B cell (primary cell): ENCODE measurements at regions of chr5 and their contacts with region 1.

Region 1: GRCh38 chr5:73565139-73565968 is at the starts of genes ANKRA2 and UTP15:
- DNase-seq: peak; percentile 99
- ATAC-seq: peak; percentile 97
- H3K4me3 ChIP-seq: peak within 1 kb of the TSS; percentile 77 to 97 (median 92)
- H3K4me3 Mint-ChIP-seq: peak within 1 kb of the TSS; percentile 88
- H3K27ac ChIP-seq: peak within 1 kb of the TSS; percentile 92 to 97
- H3K27ac Mint-ChIP-seq: peak within 1 kb of the TSS; percentile 97
- H3K4me1 ChIP-seq: peaks cover 18 to 23% of the 10 kb centered on the region in 2 donors
- H3K4me1 Mint-ChIP-seq: peaks cover 36% of the 10 kb centered on the region
- H3K27me3 ChIP-seq: no peaks in the 10 kb centered on the region
- H3K27me3 Mint-ChIP-seq: no peaks in the 10 kb centered on the region
- CTCF ChIP-seq: no peak
- total RNA-seq, gene ANKRA2: 47.9 and 56.1 TPM in 2 replicates
- total RNA-seq, gene UTP15: 25.3 and 29.9 TPM in 2 replicates

Region 2: GRCh38 chr5:72319976-72320752 is 1245.2 kb before region 1 on chr5 and contains the starts of genes MRPS27 and PTCD2:
- CTCF ChIA-PET with region 1: no interaction called
- POLR2A ChIA-PET with region 1: no interaction called
- intact Hi-C with region 1: loop called (anchors 2 kb)
- DNase-seq: peak; percentile 97
- ATAC-seq: peak; percentile 99
- H3K4me3 ChIP-seq: peak within 1 kb of the TSS; percentile 61 to 98 (median 81)
- H3K4me3 Mint-ChIP-seq: peak within 1 kb of the TSS; percentile 91
- H3K27ac ChIP-seq: peak within 1 kb of the TSS; percentile 47 to 60
- H3K27ac Mint-ChIP-seq: peak within 1 kb of the TSS; percentile 95
- H3K4me1 ChIP-seq: peaks cover 8 to 13% of the 10 kb centered on the region in 2 donors
- H3K4me1 Mint-ChIP-seq: peaks cover 29% of the 10 kb centered on the region
- H3K27me3 ChIP-seq: no peaks in the 10 kb centered on the region
- H3K27me3 Mint-ChIP-seq: no peaks in the 10 kb centered on the region
- CTCF ChIP-seq: no peak
- total RNA-seq, gene MRPS27: 52.8 and 58.3 TPM in 2 replicates
- total RNA-seq, gene PTCD2: 10.1 and 10.5 TPM in 2 replicates

Region 3: DNA sequence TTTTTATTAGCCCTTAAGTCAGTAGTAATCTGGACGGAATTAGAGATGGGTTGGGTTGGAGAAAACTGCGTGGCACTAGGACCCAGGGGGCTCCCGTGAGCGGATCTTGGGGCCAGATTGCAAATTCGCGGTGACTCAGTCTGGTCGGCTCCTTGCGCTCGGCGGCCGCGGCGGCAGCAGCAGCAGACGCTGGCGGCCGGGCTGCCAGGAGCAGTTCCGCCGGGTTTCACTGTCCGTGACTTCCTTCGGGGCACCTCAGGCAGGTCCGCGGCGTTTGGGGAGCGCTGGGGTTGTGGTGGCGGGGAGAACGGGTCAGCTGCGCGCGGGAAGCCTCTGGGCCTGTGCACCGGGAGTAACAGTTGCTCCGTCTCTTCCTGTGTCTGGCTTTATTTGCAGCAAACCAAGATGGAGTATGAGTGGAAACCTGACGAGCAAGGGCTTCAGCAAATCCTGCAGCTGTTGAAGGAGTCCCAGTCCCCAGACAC is 717.3 kb before region 1 on chr5:
- CTCF ChIA-PET with region 1: no interaction called
- POLR2A ChIA-PET with region 1: no interaction called
- intact Hi-C with region 1: loop called (anchors 10 kb)
- DNase-seq: peak; percentile 90
- ATAC-seq: peak; percentile 75
- H3K4me3 ChIP-seq: peak overlapping the region; percentile 75 to 96 (median 91)
- H3K4me3 Mint-ChIP-seq: peak overlapping the region; percentile 99
- H3K27ac ChIP-seq: peak overlapping the region; percentile 83 to 89
- H3K27ac Mint-ChIP-seq: peak overlapping the region; percentile 99
- H3K4me1 ChIP-seq: peaks cover 18 to 40% of the 10 kb centered on the region in 2 donors
- H3K4me1 Mint-ChIP-seq: peaks cover 54% of the 10 kb centered on the region
- H3K27me3 ChIP-seq: no peaks in the 10 kb centered on the region
- H3K27me3 Mint-ChIP-seq: no peaks in the 10 kb centered on the region
- CTCF ChIP-seq: no peak

Region 4: DNA sequence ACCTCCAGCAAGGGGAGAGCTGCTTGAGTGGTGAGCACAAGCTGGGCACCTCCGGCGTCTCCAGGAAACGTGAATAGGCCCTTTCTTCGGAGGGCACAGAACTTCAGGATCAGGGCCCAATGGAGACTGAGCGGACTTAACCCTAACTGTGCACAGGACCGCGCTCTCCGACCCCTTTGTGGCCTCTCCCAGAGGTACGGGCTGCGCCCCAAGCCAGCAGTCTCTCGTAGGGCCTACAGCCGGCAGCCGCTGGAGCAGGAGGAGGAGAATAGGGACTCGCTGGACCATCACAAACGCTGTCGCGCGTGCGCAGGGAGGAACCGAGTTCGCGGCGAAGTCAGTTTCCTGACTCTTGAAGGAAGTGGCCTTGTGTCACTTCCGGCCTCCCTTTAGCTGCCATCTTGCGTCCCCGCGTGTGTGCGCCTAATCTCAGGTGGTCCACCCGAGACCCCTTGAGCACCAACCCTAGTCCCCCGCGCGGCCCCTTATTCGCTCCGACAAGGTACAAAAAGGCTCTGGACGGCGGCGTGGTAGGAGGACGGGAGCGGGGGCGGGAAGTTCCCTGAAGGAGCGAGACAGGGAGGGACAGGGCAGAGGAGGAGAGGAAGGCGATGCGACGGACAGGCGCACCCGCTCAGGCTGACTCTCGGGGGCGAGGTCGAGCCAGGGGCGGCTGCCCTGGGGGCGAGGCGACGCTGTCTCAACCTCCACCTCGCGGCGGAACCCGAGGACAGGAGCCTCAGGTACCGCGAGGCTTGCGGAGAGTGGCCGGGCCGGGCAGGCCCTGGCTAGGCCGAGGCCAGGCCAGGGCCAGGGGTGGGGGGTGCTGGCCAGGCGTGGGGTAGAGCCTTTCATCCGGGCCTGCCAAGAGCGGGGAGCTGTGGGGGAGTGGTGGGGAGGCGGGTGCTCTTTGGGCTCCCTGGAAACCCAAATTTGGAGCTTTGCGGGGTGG is 67.0 kb before region 1 on chr5 and contains the start of gene BTF3:
- CTCF ChIA-PET with region 1: interaction called, 3 read pairs
- POLR2A ChIA-PET with region 1: interaction called, 3 read pairs
- intact Hi-C with region 1: loop called (anchors 1 kb)
- DNase-seq: peak; percentile 96
- ATAC-seq: peak; percentile 95
- H3K4me3 ChIP-seq: peak within 1 kb of the TSS; percentile 60 to 98 (median 97)
- H3K4me3 Mint-ChIP-seq: peak within 1 kb of the TSS; percentile 99
- H3K27ac ChIP-seq: peak within 1 kb of the TSS; percentile 96 to 99
- H3K27ac Mint-ChIP-seq: peak within 1 kb of the TSS; percentile 99
- H3K4me1 ChIP-seq: peaks cover 19 to 33% of the 10 kb centered on the region in 2 donors
- H3K4me1 Mint-ChIP-seq: peaks cover 37% of the 10 kb centered on the region
- H3K27me3 ChIP-seq: no peaks in the 10 kb centered on the region
- H3K27me3 Mint-ChIP-seq: peaks cover 13% of the 10 kb centered on the region
- CTCF ChIP-seq: no peak
- total RNA-seq, gene BTF3: 452 and 466 TPM in 2 replicates

Region 5: GRCh38 chr5:73540192-73540591 is 25.2 kb before region 1 on chr5:
- CTCF ChIA-PET with region 1: interaction called, 5 read pairs
- POLR2A ChIA-PET with region 1: no interaction called
- intact Hi-C with region 1: loop called (anchors 1 kb)
- DNase-seq: no peak
- ATAC-seq: no peak
- H3K4me3 ChIP-seq: no peak overlapping the region
- H3K4me3 Mint-ChIP-seq: no peak overlapping the region
- H3K27ac ChIP-seq: no peak overlapping the region
- H3K27ac Mint-ChIP-seq: no peak overlapping the region
- H3K4me1 ChIP-seq: no peaks in the 10 kb centered on the region
- H3K4me1 Mint-ChIP-seq: no peaks in the 10 kb centered on the region
- H3K27me3 ChIP-seq: peaks cover 0 to 6% (median 3%) of the 10 kb centered on the region in 4 experiments
- H3K27me3 Mint-ChIP-seq: peaks cover 31% of the 10 kb centered on the region
- CTCF ChIP-seq: no peak

Region 6: DNA sequence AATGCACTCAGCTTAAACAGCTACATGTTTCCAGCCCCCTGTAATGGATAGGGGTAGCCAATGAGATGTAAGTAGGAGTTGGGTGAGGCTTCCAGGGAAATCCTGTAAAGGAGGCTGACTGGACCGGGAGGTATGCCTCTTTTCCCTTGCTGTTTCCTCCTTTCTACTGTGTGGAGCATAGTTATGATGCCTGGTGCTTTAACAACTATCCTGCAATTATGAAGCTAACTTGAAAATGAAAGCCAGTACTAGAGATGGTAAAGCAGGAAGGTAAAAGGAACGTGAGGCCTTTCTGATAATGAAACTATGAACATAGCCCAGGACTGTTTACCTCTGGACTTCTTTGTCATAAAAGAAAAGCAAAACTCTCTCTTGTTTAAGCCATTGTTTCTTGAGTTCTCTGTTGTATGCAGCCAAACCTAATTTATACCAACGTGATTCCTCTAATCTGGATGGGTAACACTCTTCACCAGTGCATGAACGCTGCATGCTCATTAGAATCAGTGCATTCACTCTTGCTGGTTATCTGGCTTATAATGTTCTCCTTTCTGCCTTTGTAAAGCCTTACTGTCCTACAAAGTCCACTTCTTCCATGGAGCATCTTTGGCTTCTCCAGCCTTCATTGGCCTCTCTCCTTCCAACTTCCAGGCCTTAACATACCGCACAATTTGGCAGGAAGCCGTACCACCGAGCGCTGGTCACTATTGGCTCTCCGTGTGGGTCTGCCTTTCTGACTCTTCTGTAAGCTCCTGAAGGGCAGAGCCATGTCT is 52.3 kb after region 1 on chr5:
- CTCF ChIA-PET with region 1: no interaction called
- POLR2A ChIA-PET with region 1: no interaction called
- intact Hi-C with region 1: no loop called
- DNase-seq: no peak
- ATAC-seq: no peak
- H3K4me3 ChIP-seq: no peak overlapping the region
- H3K4me3 Mint-ChIP-seq: no peak overlapping the region
- H3K27ac ChIP-seq: no peak overlapping the region
- H3K27ac Mint-ChIP-seq: no peak overlapping the region
- H3K4me1 ChIP-seq: no peaks in the 10 kb centered on the region
- H3K4me1 Mint-ChIP-seq: no peaks in the 10 kb centered on the region
- H3K27me3 ChIP-seq: peaks cover 0 to 4% (median 0%) of the 10 kb centered on the region in 4 experiments
- H3K27me3 Mint-ChIP-seq: peaks cover 43% of the 10 kb centered on the region
- CTCF ChIP-seq: no peak

Region 7: DNA sequence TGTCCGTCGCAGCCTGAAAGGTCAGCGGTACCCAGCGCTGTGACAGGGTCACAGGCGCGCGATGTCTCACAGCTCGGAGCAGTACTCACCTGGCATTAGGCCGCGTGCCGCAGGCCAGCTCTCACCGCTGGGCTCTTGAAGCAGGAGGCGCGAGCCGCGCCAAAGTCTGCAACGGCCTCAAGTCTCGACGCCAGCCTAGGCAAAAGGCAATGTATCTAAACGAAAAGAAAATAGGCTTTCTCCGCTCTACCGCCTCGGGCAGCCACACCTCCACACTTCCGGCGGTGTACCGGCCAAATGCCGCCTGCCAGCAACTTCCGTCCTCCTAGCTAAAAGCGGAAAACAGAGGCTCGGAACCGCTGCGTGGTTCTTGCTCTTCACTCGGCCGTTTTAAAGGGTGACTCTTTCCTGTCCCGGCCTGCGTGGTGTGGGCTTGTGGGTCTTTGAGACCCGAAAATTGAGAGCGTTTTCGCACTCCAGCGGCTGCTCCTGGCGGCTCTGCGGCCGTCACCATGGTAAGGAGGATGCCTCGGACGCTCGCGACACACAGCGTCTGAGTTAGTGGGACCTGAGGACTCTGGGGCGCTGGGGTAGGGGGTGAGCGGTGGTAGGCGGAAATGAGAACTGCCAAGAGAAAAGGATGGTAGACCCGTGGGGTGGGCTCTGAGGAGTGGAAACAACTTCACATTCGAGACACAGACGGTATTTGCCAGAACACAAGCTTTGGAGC is 1201.7 kb after region 1 on chr5 and contains the starts of genes GFM2 and NSA2:
- CTCF ChIA-PET with region 1: no interaction called
- POLR2A ChIA-PET with region 1: no interaction called
- intact Hi-C with region 1: loop called (anchors 2 kb)
- DNase-seq: peak; percentile 95
- ATAC-seq: peak; percentile 89
- H3K4me3 ChIP-seq: peak within 1 kb of the TSS; percentile 71 to 99 (median 92)
- H3K4me3 Mint-ChIP-seq: peak within 1 kb of the TSS; percentile 100
- H3K27ac ChIP-seq: peak within 1 kb of the TSS; percentile 62 to 85
- H3K27ac Mint-ChIP-seq: peak within 1 kb of the TSS; percentile 98
- H3K4me1 ChIP-seq: peaks cover 20 to 21% of the 10 kb centered on the region in 2 donors
- H3K4me1 Mint-ChIP-seq: peaks cover 29% of the 10 kb centered on the region
- H3K27me3 ChIP-seq: no peaks in the 10 kb centered on the region
- H3K27me3 Mint-ChIP-seq: no peaks in the 10 kb centered on the region
- CTCF ChIP-seq: no peak
- total RNA-seq, gene GFM2: 22.6 and 28.5 TPM in 2 replicates
- total RNA-seq, gene NSA2: 126 and 129 TPM in 2 replicates

Region 8: DNA sequence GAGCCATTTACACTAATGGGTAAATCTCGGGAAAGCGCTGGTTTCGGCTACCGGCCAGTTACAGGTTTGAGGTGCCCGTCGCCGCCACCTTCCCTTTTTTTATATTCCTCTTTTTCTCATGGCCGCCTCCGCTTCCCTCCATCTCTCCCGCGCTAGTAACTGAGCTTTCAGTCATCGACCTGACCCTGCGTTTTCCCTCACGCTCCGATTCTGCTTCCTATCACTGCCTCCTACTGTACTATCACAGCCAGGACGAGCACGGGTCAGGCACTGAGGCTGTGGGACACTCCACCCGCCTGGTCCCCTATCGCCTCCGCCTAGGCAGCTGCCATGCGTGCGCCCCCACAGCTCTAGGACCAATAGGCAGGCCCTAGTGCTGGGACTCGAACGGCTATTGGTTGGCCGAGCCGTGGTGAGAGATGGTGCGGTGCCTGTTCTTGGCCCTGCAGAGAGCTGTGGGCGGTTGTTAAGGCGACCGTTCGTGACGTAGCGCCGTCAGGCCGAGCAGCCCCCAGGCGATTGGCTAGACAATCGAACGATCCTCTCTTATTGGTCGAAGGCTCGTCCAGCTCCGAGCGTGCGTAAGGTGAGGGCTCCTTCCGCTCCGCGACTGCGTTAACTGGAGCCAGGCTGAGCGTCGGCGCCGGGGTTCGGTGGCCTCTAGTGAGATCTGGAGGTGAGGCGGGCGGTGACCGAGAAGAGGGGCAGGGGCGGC is 1771.4 kb after region 1 on chr5 and contains the start of gene HMGCR:
- CTCF ChIA-PET with region 1: no interaction called
- POLR2A ChIA-PET with region 1: no interaction called
- intact Hi-C with region 1: loop called (anchors 2 kb)
- DNase-seq: peak; percentile 99
- ATAC-seq: peak; percentile 95
- H3K4me3 ChIP-seq: peak within 1 kb of the TSS; percentile 71 to 98 (median 88)
- H3K4me3 Mint-ChIP-seq: no peak within 1 kb of the TSS
- H3K27ac ChIP-seq: peak within 1 kb of the TSS; percentile 81 to 91
- H3K27ac Mint-ChIP-seq: no peak within 1 kb of the TSS
- H3K4me1 ChIP-seq: peaks cover 16 to 17% of the 10 kb centered on the region in 2 donors
- H3K4me1 Mint-ChIP-seq: peaks cover 30% of the 10 kb centered on the region
- H3K27me3 ChIP-seq: no peaks in the 10 kb centered on the region
- H3K27me3 Mint-ChIP-seq: no peaks in the 10 kb centered on the region
- CTCF ChIP-seq: peak; percentile 9
- total RNA-seq, gene HMGCR: 55.7 and 64.6 TPM in 2 replicates